Activated naive CD4-positive, alpha-beta T cell treated with anti-CD3 and anti-CD28 coated beads, Interleukin-2, amount 10 ng/mL, durations not matched to agents 7 days and 5 days (primary cell): ENCODE measurements at regions of chr6 and their contacts with region 1.

Region 1: GRCh38 chr6:152301764-152302568 is 335.2 kb downstream of the SYNE1 start:
- DNase-seq: peak; percentile 92
- H3K4me3 Mint-ChIP-seq: peak overlapping the region; percentile 100
- H3K27ac Mint-ChIP-seq: peak overlapping the region; percentile 99
- H3K4me1 Mint-ChIP-seq: peaks cover 29% of the 10 kb centered on the region
- H3K27me3 Mint-ChIP-seq: no peaks in the 10 kb centered on the region

Region 2: DNA sequence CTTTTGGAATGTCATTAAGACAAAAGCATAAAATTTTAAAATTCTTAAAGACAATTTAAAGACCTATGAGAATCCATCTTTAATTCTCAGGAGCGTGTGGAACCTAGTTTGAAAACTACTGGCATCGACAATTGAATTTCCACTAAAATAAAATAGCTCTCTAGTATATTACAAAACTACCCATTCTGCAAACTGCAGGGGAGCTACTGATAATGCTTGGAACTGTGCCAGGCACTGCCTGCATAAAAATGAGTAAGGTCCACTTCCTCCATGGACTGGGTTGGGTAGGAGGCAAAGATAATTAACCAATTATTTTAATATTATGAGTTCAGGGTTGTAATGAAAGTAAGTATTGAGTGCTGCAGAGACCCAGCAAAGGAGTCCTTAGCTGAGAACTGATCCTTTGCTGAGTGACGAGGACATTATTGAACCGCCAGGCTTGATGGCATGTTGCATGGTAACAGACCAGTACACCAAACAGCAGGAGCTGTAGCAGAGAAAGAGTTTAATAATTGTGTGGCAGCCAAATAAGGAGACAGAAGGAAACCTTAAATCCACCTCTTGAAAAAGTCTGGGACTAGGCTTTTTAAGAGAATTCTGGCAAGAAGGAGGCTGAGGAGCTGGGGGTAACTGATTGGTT is 233.2 kb before region 1 on chr6:
- CTCF ChIA-PET with region 1: no interaction called
- DNase-seq: no peak
- H3K4me3 Mint-ChIP-seq: no peak overlapping the region
- H3K27ac Mint-ChIP-seq: no peak overlapping the region
- H3K4me1 Mint-ChIP-seq: no peaks in the 10 kb centered on the region
- H3K27me3 Mint-ChIP-seq: no peaks in the 10 kb centered on the region

Region 3: GRCh38 chr6:152124429-152125074 is 177.4 kb before region 1 on chr6:
- CTCF ChIA-PET with region 1: no interaction called
- DNase-seq: no peak
- H3K4me3 Mint-ChIP-seq: no peak overlapping the region
- H3K27ac Mint-ChIP-seq: peak overlapping the region; percentile 7
- H3K4me1 Mint-ChIP-seq: peaks cover 2% of the 10 kb centered on the region
- H3K27me3 Mint-ChIP-seq: no peaks in the 10 kb centered on the region

Region 4: GRCh38 chr6:152338335-152339125 is 36.6 kb after region 1 on chr6:
- CTCF ChIA-PET with region 1: interaction called, 22 read pairs
- DNase-seq: peak; percentile 67
- H3K4me3 Mint-ChIP-seq: no peak overlapping the region
- H3K27ac Mint-ChIP-seq: no peak overlapping the region
- H3K4me1 Mint-ChIP-seq: peaks cover 2% of the 10 kb centered on the region
- H3K27me3 Mint-ChIP-seq: peaks cover 29% of the 10 kb centered on the region

Region 5: GRCh38 chr6:152661776-152662175 is 359.8 kb after region 1 on chr6:
- CTCF ChIA-PET with region 1: no interaction called
- DNase-seq: no peak
- H3K4me3 Mint-ChIP-seq: no peak overlapping the region
- H3K27ac Mint-ChIP-seq: no peak overlapping the region
- H3K4me1 Mint-ChIP-seq: no peaks in the 10 kb centered on the region
- H3K27me3 Mint-ChIP-seq: no peaks in the 10 kb centered on the region